ENCODE measurements at regions of chr11 and their contacts with region 1.

Region 1: DNA sequence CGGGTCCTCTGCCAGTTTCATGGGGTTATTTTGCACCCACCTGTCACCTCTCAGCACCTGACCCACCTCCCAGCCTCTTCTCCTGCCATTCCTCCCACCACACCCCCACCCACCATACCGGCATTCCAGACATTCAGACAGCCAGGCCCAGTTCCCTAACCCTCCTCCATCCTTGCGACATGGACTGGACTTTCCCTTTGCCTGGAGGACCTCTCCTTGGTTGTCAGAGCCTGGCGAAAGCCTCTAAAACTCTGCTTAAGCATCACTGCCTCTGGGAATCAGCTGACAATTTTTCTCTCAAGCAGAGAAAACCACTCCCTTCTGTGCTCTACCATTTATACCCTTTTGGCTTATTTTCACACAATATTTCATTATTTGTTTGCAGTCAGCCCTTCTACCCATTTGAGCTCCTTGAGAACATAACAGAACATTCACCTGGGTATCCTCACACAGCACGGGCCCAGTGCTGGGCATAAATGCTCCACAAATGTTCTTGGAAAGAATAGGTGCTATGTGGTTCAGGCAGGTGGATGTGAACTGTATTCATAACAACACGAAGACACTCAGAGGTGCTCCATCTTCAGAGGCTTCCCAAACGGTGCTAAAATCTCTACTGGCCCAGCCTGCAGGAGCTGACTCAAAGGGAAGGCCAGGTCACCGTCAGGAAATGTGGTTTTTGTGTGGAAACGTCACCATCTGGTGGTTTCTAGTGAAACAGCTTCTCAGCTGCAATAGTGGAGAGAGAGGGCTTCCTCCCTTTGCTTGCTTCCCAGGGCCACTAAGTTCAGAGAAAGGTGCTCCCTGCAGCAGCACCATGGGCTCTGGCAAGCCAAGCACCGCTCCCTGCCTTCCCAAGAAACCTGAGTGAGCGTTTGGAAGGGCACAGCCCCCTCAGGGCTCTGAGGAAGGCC is 10.4 kb downstream of the SPATA19 start:
- DNase-seq: peak in 4 of 10 donors; percentile 58 to 64 (median 60)
- H3K4me3 ChIP-seq: no peak overlapping the region
- H3K27ac ChIP-seq: peak overlapping the region in 3 of 59 donors; percentile 4 to 27 (median 20)
- H3K27me3 ChIP-seq: peaks cover 0 to 8% (median 0%) of the 10 kb centered on the region in 45 donors
- CTCF ChIP-seq: peak in 54 of 56 donors; percentile 36 to 88 (median 70)

Region 2: GRCh38 chr11:133134314-133135173 is 700.4 kb before region 1 on chr11:
- intact Hi-C with region 1: loop called in 1 of 2 experiments (anchors 5 kb)
- DNase-seq: peak; percentile 33 to 76 (median 64)
- H3K4me3 ChIP-seq: no peak overlapping the region
- H3K27ac ChIP-seq: peak overlapping the region in 3 of 59 donors; percentile 3 to 9 (median 5)
- H3K27me3 ChIP-seq: peaks cover 0 to 10% (median 0%) of the 10 kb centered on the region in 45 donors
- CTCF ChIP-seq: peak; percentile 66 to 98 (median 90)

Measured in dorsolateral prefrontal cortex (tissue), 120 donors.